GM12878 (cell line): ENCODE measurements at regions of chr12 and their contacts with region 1.

Region 1: GRCh38 chr12:108633534-108634248 is at the start of gene SELPLG:
- DNase-seq: peak; percentile 99
- ATAC-seq: peak; percentile 64
- H3K4me3 ChIP-seq: peak within 1 kb of the TSS; percentile 76
- H3K27ac ChIP-seq: peak within 1 kb of the TSS; percentile 86
- H3K4me1 ChIP-seq: peaks cover 87% of the 10 kb centered on the region
- H3K27me3 ChIP-seq: no peaks in the 10 kb centered on the region
- CTCF ChIP-seq: peak; percentile 32 to 41 (median 36); a peak in 3 of 6 replicates
- EP300 ChIP-seq: peak; percentile 99
- POLR2A ChIP-seq: peak; percentile 77
- RAD21 ChIP-seq: no peak; the same call in 1 of the 2 replicates
- polyA plus RNA-seq, gene SELPLG: 3.2 to 5.3 TPM

Region 2: DNA sequence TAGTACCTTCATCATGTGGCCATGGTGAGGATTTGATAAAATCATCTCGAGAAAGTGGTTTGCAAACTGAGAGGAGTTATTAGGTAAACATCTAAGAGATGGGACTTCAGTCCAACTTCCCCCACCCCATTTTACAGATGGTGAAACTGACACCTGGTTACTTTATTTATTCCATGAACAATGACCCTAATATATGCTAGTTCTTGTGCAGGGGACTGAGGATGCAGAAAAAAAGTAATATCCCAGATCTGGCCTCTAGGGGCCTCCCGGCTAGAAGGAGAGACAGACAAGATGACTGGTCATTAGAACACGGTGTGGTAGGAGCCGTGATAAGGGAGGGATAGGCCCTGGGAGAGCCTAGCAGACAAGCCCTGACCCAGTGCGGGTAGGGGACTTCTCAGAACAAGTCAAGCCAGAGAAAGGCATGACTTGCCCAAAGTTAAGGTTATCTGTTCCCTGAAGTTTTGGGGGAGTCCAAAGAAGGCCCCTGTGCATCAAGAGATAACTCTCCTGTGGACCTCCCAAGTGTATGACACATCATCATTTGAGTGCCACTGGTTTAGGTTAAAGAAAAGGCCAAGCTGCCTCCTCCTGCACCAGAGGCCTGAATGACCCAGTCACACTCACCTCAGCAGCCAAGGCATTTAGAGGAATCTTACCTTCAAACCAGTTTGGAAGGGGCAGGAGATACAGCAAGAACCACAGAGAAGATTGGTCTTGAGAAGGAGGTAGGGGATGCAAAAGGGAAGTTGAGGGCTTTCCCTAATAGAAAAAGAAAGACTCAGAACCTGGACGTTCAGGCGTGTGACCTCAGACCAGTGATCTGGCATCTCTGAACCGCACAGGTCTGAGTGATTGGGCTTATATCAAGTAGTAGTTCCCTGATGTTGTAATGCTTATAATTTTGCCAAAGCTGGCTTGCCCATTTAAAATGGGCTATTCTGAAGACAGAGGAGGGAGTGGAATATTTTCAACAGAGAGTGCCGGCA is 296.2 kb before region 1 on chr12:
- CTCF ChIA-PET with region 1: no interaction called
- POLR2A ChIA-PET with region 1: interaction called, 3 read pairs
- RAD21 ChIA-PET with region 1: no interaction called
- SMC1A ChIA-PET with region 1: no interaction called
- in situ Hi-C with region 1: no loop called
- intact Hi-C with region 1: loop called (anchors 10 kb)
- DNase-seq: no peak
- ATAC-seq: peak; percentile 68
- H3K4me3 ChIP-seq: no peak overlapping the region
- H3K27ac ChIP-seq: peak overlapping the region; percentile 84
- H3K4me1 ChIP-seq: peaks cover 63% of the 10 kb centered on the region
- H3K27me3 ChIP-seq: no peaks in the 10 kb centered on the region
- CTCF ChIP-seq: peak; percentile 52 to 66 (median 63)
- EP300 ChIP-seq: peak; percentile 19 to 29; a peak in 1 of 4 replicates
- POLR2A ChIP-seq: no peak
- RAD21 ChIP-seq: peak; percentile 70

Region 3: GRCh38 chr12:108618079-108618952 is 15.4 kb before region 1 on chr12:
- CTCF ChIA-PET with region 1: interaction called, 156 read pairs
- POLR2A ChIA-PET with region 1: interaction called, 73 read pairs
- RAD21 ChIA-PET with region 1: interaction called, 224 read pairs
- SMC1A ChIA-PET with region 1: interaction called, 88 read pairs
- in situ Hi-C with region 1: no loop called
- intact Hi-C with region 1: loop called (anchors 1 kb)
- DNase-seq: no peak
- ATAC-seq: peak; percentile 73
- H3K4me3 ChIP-seq: no peak overlapping the region
- H3K27ac ChIP-seq: peak overlapping the region; percentile 99
- H3K4me1 ChIP-seq: peaks cover 47% of the 10 kb centered on the region
- H3K27me3 ChIP-seq: no peaks in the 10 kb centered on the region
- CTCF ChIP-seq: peak; percentile 92 to 95 (median 94)
- EP300 ChIP-seq: no peak
- POLR2A ChIP-seq: no peak
- RAD21 ChIP-seq: peak; percentile 96

Region 4: GRCh38 chr12:108685469-108686260 is 52.0 kb after region 1 on chr12:
- CTCF ChIA-PET with region 1: interaction called, 4 read pairs
- POLR2A ChIA-PET with region 1: interaction called, 6 read pairs
- RAD21 ChIA-PET with region 1: interaction called, 17 read pairs
- SMC1A ChIA-PET with region 1: interaction called, 15 read pairs
- in situ Hi-C with region 1: no loop called
- intact Hi-C with region 1: loop called (anchors 2 kb)
- DNase-seq: no peak
- ATAC-seq: peak; percentile 43
- H3K4me3 ChIP-seq: no peak overlapping the region
- H3K27ac ChIP-seq: peak overlapping the region; percentile 57
- H3K4me1 ChIP-seq: peaks cover 42% of the 10 kb centered on the region
- H3K27me3 ChIP-seq: no peaks in the 10 kb centered on the region
- CTCF ChIP-seq: no peak
- EP300 ChIP-seq: no peak
- POLR2A ChIP-seq: no peak
- RAD21 ChIP-seq: no peak

Region 5: GRCh38 chr12:108731105-108731865 is 97.6 kb after region 1 on chr12 and contains the start of gene CORO1C:
- CTCF ChIA-PET with region 1: no interaction called
- POLR2A ChIA-PET with region 1: interaction called, 3 read pairs
- RAD21 ChIA-PET with region 1: interaction called, 20 read pairs
- SMC1A ChIA-PET with region 1: interaction called, 5 read pairs
- in situ Hi-C with region 1: no loop called
- intact Hi-C with region 1: no loop called
- DNase-seq: peak; percentile 90
- ATAC-seq: peak; percentile 80
- H3K4me3 ChIP-seq: peak within 1 kb of the TSS; percentile 88
- H3K27ac ChIP-seq: peak within 1 kb of the TSS; percentile 79
- H3K4me1 ChIP-seq: peaks cover 13% of the 10 kb centered on the region
- H3K27me3 ChIP-seq: no peaks in the 10 kb centered on the region
- CTCF ChIP-seq: peak; percentile 80 to 88 (median 86)
- EP300 ChIP-seq: no peak; a peak in 1 of 4 replicates
- POLR2A ChIP-seq: peak; percentile 86
- RAD21 ChIP-seq: peak; percentile 58
- polyA plus RNA-seq, gene CORO1C: 52.7 to 52.9 TPM

Region 6: DNA sequence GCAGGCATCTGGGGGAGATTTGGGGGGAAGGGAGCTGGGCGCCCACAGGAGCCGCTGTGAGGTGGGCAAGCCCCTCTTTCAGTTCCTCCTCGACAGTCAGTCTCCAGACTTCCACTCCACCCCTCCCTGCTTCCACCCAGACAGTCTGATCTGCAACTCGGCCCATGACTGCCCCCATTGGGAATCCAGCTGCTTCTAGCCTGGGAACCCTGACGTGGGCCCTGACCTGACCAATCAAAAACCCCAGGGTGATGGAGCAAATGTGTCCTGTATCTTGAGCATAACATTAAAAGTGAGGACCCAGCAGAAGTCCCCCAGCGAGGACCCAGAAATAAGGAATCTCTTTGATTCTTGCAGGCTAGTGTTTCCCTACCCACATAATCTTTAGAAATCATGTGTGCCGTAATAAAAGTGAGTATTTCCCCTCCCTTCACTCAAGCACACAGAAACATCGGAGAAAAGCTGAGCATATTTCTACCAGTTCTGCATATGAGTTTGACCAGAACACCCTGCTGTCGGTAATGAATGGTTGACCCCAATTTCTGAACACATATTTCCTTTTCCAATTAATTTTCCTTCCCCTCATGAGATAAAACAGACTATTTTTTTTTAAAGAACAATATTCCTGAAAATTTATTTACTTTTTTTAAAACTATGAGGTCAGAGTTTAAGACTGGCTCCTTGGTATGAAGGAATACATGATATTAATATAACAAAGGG is 217.3 kb after region 1 on chr12:
- CTCF ChIA-PET with region 1: interaction called, 3 read pairs
- POLR2A ChIA-PET with region 1: interaction called, 3 read pairs
- RAD21 ChIA-PET with region 1: interaction called, 22 read pairs
- SMC1A ChIA-PET with region 1: interaction called, 5 read pairs
- in situ Hi-C with region 1: no loop called
- intact Hi-C with region 1: loop called (anchors 2 kb)
- DNase-seq: peak; percentile 79
- ATAC-seq: peak; percentile 82
- H3K4me3 ChIP-seq: no peak overlapping the region
- H3K27ac ChIP-seq: peak overlapping the region; percentile 74
- H3K4me1 ChIP-seq: peaks cover 36% of the 10 kb centered on the region
- H3K27me3 ChIP-seq: no peaks in the 10 kb centered on the region
- CTCF ChIP-seq: peak in 2 of 3 experiments; percentile 27 to 56; a peak in 4 of 6 replicates
- EP300 ChIP-seq: peak; percentile 66 to 84; a peak in 3 of 4 replicates
- POLR2A ChIP-seq: no peak
- RAD21 ChIP-seq: peak; percentile 67; the same call in 1 of the 2 replicates

Region 7: DNA sequence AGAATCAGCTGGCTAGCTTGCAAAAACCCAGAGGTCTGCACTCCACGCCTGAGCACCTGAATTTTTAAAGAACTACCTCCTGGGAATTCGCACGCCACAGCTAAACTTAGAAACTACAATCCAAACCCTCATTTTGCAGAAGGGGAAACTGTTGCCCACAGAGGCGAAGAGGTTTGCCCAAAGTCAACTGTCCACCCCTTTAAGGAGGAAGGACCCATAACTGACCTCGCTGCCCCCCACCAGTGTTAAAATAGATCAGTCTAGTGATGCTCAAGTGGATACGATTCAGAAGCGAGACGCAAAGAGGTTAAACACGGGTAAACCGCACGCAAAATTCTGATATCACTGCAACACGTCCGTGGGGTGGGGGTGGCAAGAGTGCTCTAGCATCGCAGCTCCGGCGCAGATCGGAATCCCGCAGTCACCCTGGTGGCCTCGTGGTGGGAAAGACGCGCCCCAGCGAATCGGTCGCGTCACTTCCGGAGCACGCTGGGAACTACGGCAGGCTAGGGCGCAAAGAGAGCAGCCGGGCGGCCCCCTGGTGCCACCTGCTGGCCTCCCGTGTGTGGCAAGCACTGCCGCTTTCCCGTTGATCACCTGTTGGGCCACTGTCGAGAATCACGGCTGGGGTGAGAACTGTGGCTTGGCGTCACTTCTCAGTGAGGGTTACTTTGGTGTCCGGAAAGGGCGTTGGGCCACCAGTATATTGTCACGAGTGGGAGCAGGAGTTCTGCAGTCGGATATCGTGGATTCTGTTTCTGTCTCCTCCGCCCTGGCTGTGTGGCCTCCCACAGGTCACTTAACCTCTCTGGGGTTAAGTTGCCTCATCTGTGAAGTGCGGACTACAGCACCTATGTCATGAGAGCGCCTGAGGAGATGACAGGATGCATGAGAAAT is 459.6 kb after region 1 on chr12 and contains the start of gene ALKBH2:
- CTCF ChIA-PET with region 1: no interaction called
- POLR2A ChIA-PET with region 1: no interaction called
- RAD21 ChIA-PET with region 1: interaction called, 3 read pairs
- SMC1A ChIA-PET with region 1: no interaction called
- in situ Hi-C with region 1: loop called (anchors 10 kb)
- intact Hi-C with region 1: loop called (anchors 10 kb)
- DNase-seq: peak; percentile 72
- ATAC-seq: peak; percentile 73
- H3K4me3 ChIP-seq: peak within 1 kb of the TSS; percentile 77
- H3K27ac ChIP-seq: peak within 1 kb of the TSS; percentile 77
- H3K4me1 ChIP-seq: peaks cover 7% of the 10 kb centered on the region
- H3K27me3 ChIP-seq: no peaks in the 10 kb centered on the region
- CTCF ChIP-seq: peak; percentile 98 to 99 (median 98); a peak in 5 of 6 replicates
- EP300 ChIP-seq: no peak
- POLR2A ChIP-seq: peak; percentile 97
- RAD21 ChIP-seq: peak; percentile 75
- polyA plus RNA-seq, gene ALKBH2: 5.6 to 8.8 TPM